CD4-positive, alpha-beta memory T cell (primary cell): ENCODE measurements at regions of chr22 and their contacts with region 1.

Region 1: DNA sequence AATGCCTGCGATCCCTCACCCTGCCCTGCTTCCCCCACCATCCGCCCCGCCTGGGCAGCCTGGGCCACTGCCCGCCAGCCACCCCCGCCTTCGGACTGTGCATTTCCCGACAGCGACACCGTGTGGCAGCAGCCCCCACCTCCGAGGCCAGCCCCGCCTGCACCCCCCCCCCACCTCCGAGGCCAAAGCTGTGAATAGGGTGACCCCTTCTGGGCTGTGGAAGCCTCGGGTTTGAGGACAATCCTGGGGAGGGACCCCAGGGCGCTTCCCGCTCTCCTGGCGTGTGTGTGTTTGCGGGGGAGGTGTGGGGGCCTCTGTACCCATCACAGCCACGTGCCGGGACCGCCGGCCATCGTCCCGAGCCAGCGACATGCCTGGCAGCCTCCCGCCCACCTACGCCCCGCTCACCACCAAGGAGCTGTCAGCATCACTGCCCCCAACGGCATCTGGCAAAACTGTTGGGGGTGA is 33.8 kb upstream of the PPARA start:
- DNase-seq: peak; percentile 74 to 83 (median 77)
- H3K4me3 ChIP-seq: no peak overlapping the region
- H3K4me3 Mint-ChIP-seq: no peak overlapping the region
- H3K27ac ChIP-seq: no peak overlapping the region
- H3K27ac Mint-ChIP-seq: peak overlapping the region in 1 of 7 donors; percentile 29
- H3K4me1 ChIP-seq: peaks cover 4% of the 10 kb centered on the region
- H3K4me1 Mint-ChIP-seq: peaks cover 0 to 1% (median 0%) of the 10 kb centered on the region in 4 donors
- H3K27me3 ChIP-seq: no peaks in the 10 kb centered on the region
- H3K27me3 Mint-ChIP-seq: no peaks in the 10 kb centered on the region

Region 2: DNA sequence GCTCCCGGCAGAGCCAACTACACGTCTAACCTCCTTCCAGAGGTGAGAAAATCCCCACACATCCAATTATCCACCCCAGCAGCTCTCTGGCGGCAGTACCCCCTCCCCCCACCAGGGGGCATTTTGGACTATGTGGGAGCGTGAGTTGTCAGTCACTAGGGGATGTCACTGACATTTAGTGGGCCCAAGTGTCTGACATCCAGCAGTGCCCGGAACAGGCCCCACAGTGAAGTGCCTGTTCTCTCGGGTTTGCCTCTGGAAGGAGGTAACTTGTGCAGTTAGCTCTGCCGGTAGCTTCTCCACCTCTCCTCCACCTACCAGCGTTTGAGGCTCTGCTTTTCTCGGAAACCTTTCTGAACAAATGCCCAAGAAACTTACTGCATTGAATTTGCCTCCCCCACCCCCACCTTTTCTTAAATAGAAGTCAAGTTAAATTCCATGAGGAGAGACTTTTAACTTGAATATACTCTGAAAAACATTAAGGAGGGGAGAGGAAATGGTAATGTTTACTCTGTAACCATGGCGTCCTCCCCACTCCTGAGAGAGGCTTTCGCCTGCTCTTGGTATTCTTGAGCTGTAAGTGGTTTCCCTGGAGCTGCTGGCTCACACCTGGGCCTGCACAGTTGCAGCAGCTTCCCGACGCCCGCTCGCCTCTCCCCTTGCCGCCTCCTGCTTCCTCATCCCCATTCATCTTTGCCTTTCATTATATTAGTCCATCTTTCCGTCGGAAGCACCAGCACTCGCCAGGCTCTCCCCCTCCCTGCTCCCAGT is 252.4 kb before region 1 on chr22:
- CTCF ChIA-PET with region 1: no interaction called
- POLR2A ChIA-PET with region 1: no interaction called
- intact Hi-C with region 1: loop called (anchors 5 kb)
- DNase-seq: peak; percentile 49 to 53 (median 50)
- H3K4me3 ChIP-seq: no peak overlapping the region
- H3K4me3 Mint-ChIP-seq: no peak overlapping the region
- H3K27ac ChIP-seq: no peak overlapping the region
- H3K27ac Mint-ChIP-seq: peak overlapping the region in 4 of 7 donors; percentile 5 to 77 (median 30)
- H3K4me1 ChIP-seq: peaks cover 9% of the 10 kb centered on the region
- H3K4me1 Mint-ChIP-seq: peaks cover 2 to 22% (median 8%) of the 10 kb centered on the region in 4 donors
- H3K27me3 ChIP-seq: peaks cover 8% of the 10 kb centered on the region
- H3K27me3 Mint-ChIP-seq: peaks cover 23 to 24% of the 10 kb centered on the region in 2 donors

Region 3: GRCh38 chr22:45994491-45995404 is 121.8 kb before region 1 on chr22:
- CTCF ChIA-PET with region 1: interaction called, 26 read pairs
- POLR2A ChIA-PET with region 1: interaction called, 3 read pairs
- intact Hi-C with region 1: loop called (anchors 1 kb)
- DNase-seq: peak; percentile 56 to 71 (median 61)
- H3K4me3 ChIP-seq: no peak overlapping the region
- H3K4me3 Mint-ChIP-seq: no peak overlapping the region
- H3K27ac ChIP-seq: no peak overlapping the region
- H3K27ac Mint-ChIP-seq: no peak overlapping the region
- H3K4me1 ChIP-seq: peaks cover 5% of the 10 kb centered on the region
- H3K4me1 Mint-ChIP-seq: peaks cover 0 to 11% (median 5%) of the 10 kb centered on the region in 4 donors
- H3K27me3 ChIP-seq: no peaks in the 10 kb centered on the region
- H3K27me3 Mint-ChIP-seq: peaks cover 1 to 6% of the 10 kb centered on the region in 2 donors

Region 4: GRCh38 chr22:46071451-46072109 is 44.9 kb before region 1 on chr22:
- CTCF ChIA-PET with region 1: no interaction called
- POLR2A ChIA-PET with region 1: no interaction called
- intact Hi-C with region 1: loop called (anchors 5 kb)
- DNase-seq: peak; percentile 44 to 75 (median 50)
- H3K4me3 ChIP-seq: peak overlapping the region in 1 of 2 donors; percentile 66
- H3K4me3 Mint-ChIP-seq: peak overlapping the region; percentile 76 to 90 (median 82)
- H3K27ac ChIP-seq: peak overlapping the region; percentile 31
- H3K27ac Mint-ChIP-seq: peak overlapping the region in 4 of 7 donors; percentile 70 to 80 (median 75)
- H3K4me1 ChIP-seq: peaks cover 56% of the 10 kb centered on the region
- H3K4me1 Mint-ChIP-seq: peaks cover 10 to 58% (median 46%) of the 10 kb centered on the region in 4 donors
- H3K27me3 ChIP-seq: no peaks in the 10 kb centered on the region
- H3K27me3 Mint-ChIP-seq: no peaks in the 10 kb centered on the region